K562 (cell line): ENCODE measurements at regions of chr13 and their contacts with region 1.

Region 1: DNA sequence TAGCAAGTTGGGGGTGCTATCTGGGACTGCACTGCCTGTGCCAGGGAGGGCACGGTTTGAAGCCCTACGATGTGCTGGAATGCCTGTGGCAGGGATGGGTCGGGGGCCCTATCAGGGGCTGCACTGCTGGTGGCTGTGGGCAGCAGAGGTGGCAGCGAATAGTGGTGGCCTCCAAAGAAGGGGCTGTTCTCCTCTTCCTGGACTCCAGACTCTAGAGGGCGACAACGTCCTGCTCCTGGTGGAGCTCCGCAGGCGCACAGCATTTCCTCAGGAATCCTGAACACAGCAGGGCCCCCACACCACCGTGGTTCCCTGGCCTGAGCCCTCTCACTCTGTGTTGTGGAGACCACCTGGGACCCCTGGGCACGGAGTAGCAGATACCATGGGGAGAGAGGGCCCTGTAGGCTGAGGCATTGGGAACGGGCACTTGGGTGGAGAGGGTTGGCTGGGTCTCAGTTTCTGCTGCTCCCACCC is 145.6 kb downstream of the TNFRSF19 start:
- DNase-seq: peak; percentile 18 to 62 (median 33)
- ATAC-seq: peak; percentile 97
- H3K4me3 ChIP-seq: no peak overlapping the region
- H3K27ac ChIP-seq: no peak overlapping the region
- H3K4me1 ChIP-seq: peaks cover 0 to 7% of the 10 kb centered on the region in 2 experiments; a peak in 1 of 5 replicates
- H3K27me3 ChIP-seq: no peaks in the 10 kb centered on the region
- CTCF ChIP-seq: peak; percentile 61 to 69 (median 67)
- EP300 ChIP-seq: no peak
- POLR2A ChIP-seq: no peak
- RAD21 ChIP-seq: peak; percentile 56 to 78

Region 2: GRCh38 chr13:23466144-23467002 is 249.4 kb before region 1 on chr13:
- CTCF ChIA-PET with region 1: no interaction called
- POLR2A ChIA-PET with region 1: no interaction called
- in situ Hi-C with region 1: no loop called
- intact Hi-C with region 1: loop called (anchors 10 kb)
- DNase-seq: peak; percentile 13 to 52 (median 34)
- ATAC-seq: peak; percentile 98
- H3K4me3 ChIP-seq: no peak overlapping the region; the same call in 1 of the 2 replicates
- H3K27ac ChIP-seq: no peak overlapping the region
- H3K4me1 ChIP-seq: peaks cover 0 to 8% of the 10 kb centered on the region in 2 experiments; a peak in 2 of 5 replicates
- H3K27me3 ChIP-seq: peaks cover 0 to 11% of the 10 kb centered on the region in 2 experiments; a peak in 2 of 5 replicates
- CTCF ChIP-seq: peak; percentile 35 to 59 (median 49); a peak in 4 of 6 replicates
- EP300 ChIP-seq: no peak
- POLR2A ChIP-seq: no peak
- RAD21 ChIP-seq: peak; percentile 36 to 46

Region 3: DNA sequence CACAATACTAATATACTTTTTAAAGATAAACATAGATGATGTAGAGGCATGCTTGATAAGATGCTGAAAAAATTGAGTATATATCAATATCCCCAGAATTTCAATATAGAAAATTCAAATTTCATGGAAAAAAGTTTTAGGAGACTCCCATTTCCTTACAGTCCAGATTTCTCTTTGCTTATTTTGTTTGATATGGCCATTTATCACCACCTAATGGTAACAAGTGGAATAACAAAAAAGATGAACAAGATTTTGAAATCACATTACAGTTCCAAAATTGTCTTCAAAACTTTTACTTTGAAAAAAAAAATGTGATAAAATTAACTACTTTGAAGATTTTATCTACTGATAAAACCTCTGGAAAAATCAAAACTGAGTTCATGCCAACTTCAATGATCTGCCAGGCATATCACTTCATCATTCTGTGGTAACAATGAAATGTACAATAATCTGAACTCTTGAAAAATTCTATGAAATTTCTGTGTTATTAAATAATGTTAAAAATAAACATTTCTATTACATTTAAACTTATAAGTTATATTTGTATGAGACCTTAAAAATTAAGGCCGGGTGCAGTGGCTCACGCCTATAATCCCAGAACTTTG is 155.9 kb after region 1 on chr13:
- CTCF ChIA-PET with region 1: interaction called, 4 read pairs
- POLR2A ChIA-PET with region 1: no interaction called
- in situ Hi-C with region 1: no loop called
- intact Hi-C with region 1: loop called (anchors 1 kb)
- DNase-seq: peak in 2 of 4 experiments; percentile 12
- ATAC-seq: no peak
- H3K4me3 ChIP-seq: no peak overlapping the region
- H3K27ac ChIP-seq: no peak overlapping the region
- H3K4me1 ChIP-seq: peaks cover 6 to 10% of the 10 kb centered on the region in 2 experiments; a peak in 3 of 5 replicates
- H3K27me3 ChIP-seq: no peaks in the 10 kb centered on the region
- CTCF ChIP-seq: peak in 1 of 3 experiments; percentile 53; a peak in 2 of 6 replicates
- EP300 ChIP-seq: no peak
- POLR2A ChIP-seq: no peak
- RAD21 ChIP-seq: peak; percentile 55 to 66

Region 4: DNA sequence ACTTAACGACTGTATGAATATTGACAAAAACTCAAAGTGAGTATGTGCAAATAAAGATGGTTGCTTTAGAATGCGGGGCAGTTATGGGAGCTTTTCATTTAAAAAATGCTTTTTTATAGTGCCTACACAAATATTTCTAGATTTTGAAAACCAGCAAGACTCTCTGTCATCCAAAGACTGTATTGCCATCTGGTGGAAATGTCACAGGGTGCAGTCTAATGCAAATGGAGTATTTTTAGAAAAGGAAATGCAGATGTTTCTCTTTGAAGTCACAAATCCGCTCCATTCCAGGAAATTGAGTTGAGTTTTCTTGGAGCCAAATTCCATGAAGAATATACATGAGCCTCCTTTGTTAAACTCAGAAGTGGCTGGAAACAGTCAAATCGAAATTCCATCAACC is 183.8 kb after region 1 on chr13:
- CTCF ChIA-PET with region 1: interaction called, 11 read pairs
- POLR2A ChIA-PET with region 1: no interaction called
- in situ Hi-C with region 1: no loop called
- intact Hi-C with region 1: loop called (anchors 5 kb)
- DNase-seq: peak in 2 of 4 experiments; percentile 13 to 45
- ATAC-seq: peak; percentile 75
- H3K4me3 ChIP-seq: no peak overlapping the region
- H3K27ac ChIP-seq: no peak overlapping the region
- H3K4me1 ChIP-seq: peaks cover 0 to 9% of the 10 kb centered on the region in 2 experiments; a peak in 2 of 5 replicates
- H3K27me3 ChIP-seq: peaks cover 3 to 15% of the 10 kb centered on the region in 2 experiments; a peak in 2 of 5 replicates
- CTCF ChIP-seq: peak; percentile 27 to 63 (median 49); a peak in 4 of 6 replicates
- EP300 ChIP-seq: no peak
- POLR2A ChIP-seq: no peak
- RAD21 ChIP-seq: no peak